H1 (cell line): ENCODE measurements at regions of chr20 and their contacts with region 1.

Region 1: DNA sequence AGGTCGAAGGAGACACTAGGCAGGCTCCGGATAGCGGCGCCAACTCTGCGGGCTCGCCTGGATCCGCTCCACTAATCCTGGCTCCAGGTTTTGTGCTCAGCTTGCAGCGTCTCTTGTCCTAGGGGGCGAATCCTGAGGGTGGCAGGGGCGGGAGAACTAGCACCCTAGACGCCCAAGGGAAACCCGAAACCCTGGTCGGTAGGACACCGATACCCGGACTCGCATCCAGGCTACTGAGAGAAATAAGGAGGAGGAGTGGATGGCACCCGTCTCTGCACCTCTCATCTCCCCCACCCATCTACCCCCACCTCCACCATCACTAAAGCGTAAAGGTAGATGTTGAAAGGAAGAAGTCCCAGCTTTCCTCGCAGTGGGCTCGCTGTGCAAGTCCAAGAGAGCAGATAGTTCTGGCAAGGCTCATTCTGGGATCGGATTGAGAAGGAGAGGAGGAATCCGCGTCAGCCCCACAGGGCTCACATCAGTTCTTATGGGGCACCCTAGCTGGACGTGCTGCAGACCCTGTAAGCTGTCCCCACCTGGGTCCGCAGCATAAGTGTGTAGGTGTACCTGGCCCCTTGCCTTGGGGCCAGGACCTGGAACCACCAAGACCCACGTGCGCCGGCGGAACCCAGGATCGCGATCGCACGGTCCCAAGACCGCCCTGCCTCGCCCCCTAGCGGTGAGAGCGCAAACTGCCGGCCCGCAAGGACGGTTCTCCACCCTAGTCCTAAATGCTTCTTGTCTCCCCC is 6.9 kb downstream of the SLC32A1 start:
- DNase-seq: peak in 1 of 2 experiments; percentile 99
- H3K4me3 ChIP-seq: peak overlapping the region; percentile 18 to 59 (median 36); a peak in 7 of 8 replicates
- H3K27ac ChIP-seq: no peak overlapping the region
- H3K4me1 ChIP-seq: peaks cover 0 to 46% (median 30%) of the 10 kb centered on the region in 4 experiments; a peak in 6 of 7 replicates
- H3K27me3 ChIP-seq: peaks cover 44 to 68% (median 62%) of the 10 kb centered on the region in 4 experiments
- CTCF ChIP-seq: peak; percentile 90 to 99 (median 98)
- EP300 ChIP-seq: peak in 1 of 2 experiments; percentile 40; a peak in 1 of 3 replicates
- POLR2A ChIP-seq: no peak
- RAD21 ChIP-seq: peak; percentile 51 to 61

Region 2: DNA sequence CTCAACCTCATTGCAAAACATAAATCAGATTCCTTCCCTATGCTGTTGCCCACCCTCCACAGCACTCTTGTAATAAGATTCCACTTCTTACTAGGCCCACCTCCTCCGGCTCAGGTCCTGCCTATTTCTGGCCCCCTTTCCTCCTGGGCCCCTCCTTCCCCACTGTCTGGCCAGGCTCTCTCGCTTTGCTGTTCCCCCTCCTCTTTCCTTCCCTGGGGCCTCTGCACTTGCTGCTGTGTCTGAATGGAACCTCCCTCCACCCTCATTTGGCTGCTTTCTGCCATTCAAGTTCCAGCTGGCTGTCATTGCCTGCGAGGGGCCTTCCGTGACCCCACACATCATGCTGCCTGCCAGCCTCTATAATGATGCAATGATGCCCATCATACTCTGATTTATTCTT is 90.6 kb before region 1 on chr20:
- CTCF ChIA-PET with region 1: interaction called, 235 read pairs
- POLR2A ChIA-PET with region 1: no interaction called
- DNase-seq: no peak
- H3K4me3 ChIP-seq: no peak overlapping the region
- H3K27ac ChIP-seq: no peak overlapping the region
- H3K4me1 ChIP-seq: peaks cover 0 to 2% (median under 1%) of the 10 kb centered on the region in 4 experiments; a peak in 2 of 7 replicates
- H3K27me3 ChIP-seq: peaks cover 3 to 12% (median 9%) of the 10 kb centered on the region in 4 experiments
- CTCF ChIP-seq: no peak
- EP300 ChIP-seq: no peak
- POLR2A ChIP-seq: no peak
- RAD21 ChIP-seq: no peak

Region 3: DNA sequence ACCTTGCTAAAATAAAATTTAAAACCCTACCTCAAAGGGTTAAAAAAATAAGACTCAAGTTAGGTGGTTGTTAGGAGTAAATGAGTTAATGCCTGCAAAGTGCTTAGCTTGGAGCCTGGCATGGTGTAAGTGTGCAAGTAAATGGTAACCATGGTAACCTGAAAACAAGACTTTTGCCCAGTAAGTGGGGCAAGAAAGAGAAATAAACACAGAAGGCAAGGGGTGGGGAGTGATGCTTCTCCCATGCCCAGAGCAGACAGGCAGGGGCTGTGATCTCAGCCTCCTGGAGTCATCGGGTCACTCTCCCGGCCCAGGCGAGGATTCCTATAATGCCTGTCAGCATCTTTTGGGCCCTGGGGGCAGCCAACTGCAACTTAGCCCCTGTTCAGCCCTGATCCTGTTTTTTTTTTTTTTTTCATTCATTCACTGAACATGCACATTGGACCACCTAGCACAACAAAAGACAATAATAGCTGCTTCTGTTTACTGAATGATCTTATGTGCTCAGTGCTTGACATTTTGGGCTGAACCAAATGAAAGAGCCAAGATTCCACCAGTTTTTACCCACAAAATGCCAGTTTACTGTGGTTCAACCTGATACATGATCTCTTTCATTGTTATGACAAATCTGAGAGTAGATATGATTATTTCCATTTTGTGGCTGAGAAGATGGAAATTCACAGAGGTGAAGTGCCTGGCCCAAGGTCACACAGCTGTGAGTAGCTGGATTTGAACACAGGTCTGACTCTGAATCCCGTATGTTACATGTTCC is 65.9 kb before region 1 on chr20:
- CTCF ChIA-PET with region 1: interaction called, 88 read pairs
- POLR2A ChIA-PET with region 1: no interaction called
- DNase-seq: no peak
- H3K4me3 ChIP-seq: no peak overlapping the region
- H3K27ac ChIP-seq: no peak overlapping the region
- H3K4me1 ChIP-seq: peaks cover 0 to 5% (median 2%) of the 10 kb centered on the region in 4 experiments; a peak in 3 of 7 replicates
- H3K27me3 ChIP-seq: no peaks in the 10 kb centered on the region; a peak in 1 of 7 replicates
- CTCF ChIP-seq: no peak
- EP300 ChIP-seq: no peak
- POLR2A ChIP-seq: no peak
- RAD21 ChIP-seq: no peak

Region 4: GRCh38 chr20:38700146-38700545 is 31.0 kb before region 1 on chr20:
- CTCF ChIA-PET with region 1: interaction called, 236 read pairs
- POLR2A ChIA-PET with region 1: no interaction called
- DNase-seq: no peak
- H3K4me3 ChIP-seq: no peak overlapping the region
- H3K27ac ChIP-seq: no peak overlapping the region
- H3K4me1 ChIP-seq: no peaks in the 10 kb centered on the region
- H3K27me3 ChIP-seq: no peaks in the 10 kb centered on the region; a peak in 1 of 7 replicates
- CTCF ChIP-seq: no peak
- EP300 ChIP-seq: no peak
- POLR2A ChIP-seq: no peak
- RAD21 ChIP-seq: no peak

Region 5: DNA sequence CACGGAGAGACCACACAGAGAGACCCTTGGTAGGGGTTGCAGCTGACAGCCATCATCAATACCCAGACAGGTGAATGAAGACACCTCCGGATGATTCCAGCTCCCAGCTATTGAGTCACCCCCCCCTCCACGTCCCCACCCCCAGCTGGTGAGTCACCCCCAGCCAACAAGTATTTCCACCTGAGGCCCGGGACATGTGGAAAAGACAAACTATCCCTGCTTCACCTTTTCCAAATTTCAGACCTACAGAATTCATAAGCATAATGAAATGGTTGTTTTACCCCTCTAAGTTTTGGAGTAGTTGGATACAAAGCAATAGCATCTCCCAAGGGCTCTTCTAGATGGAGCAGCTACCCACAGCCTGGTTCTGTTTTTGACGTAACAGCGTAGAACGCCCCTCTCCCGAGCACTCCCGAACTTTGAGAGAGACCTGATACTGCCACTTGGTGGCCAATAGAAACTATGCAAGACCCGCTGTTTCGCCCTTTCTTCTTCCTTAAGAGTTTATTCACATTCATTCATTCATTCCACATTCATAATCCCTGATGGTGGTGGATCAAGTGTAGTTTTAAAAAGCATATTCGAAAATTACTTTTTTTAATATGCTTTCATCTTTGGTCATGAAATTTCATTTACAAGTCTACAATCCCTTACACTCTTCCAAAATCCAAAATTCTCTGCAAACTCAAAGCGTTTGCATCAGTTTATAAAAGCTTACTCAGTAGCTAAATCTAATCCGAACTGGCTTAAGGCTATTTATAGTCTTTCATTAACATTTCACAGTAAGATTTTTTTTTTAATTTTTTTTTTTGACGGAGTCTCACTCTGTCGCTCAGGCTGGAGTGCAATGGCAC is 59.3 kb after region 1 on chr20:
- CTCF ChIA-PET with region 1: interaction called, 48 read pairs
- POLR2A ChIA-PET with region 1: no interaction called
- DNase-seq: no peak
- H3K4me3 ChIP-seq: no peak overlapping the region
- H3K27ac ChIP-seq: no peak overlapping the region
- H3K4me1 ChIP-seq: no peaks in the 10 kb centered on the region; a peak in 1 of 7 replicates
- H3K27me3 ChIP-seq: no peaks in the 10 kb centered on the region
- CTCF ChIP-seq: peak; percentile 36 to 72 (median 70)
- EP300 ChIP-seq: no peak
- POLR2A ChIP-seq: no peak
- RAD21 ChIP-seq: peak; percentile 75 to 80